ENCODE measurements at regions of chr10 and their contacts with region 1.

Region 1: GRCh38 chr10:12214763-12215218 is 18.8 kb downstream of the CDC123 start:
- DNase-seq: peak; percentile 24
- H3K4me3 ChIP-seq: no peak overlapping the region
- H3K27ac ChIP-seq: no peak overlapping the region
- H3K27me3 ChIP-seq: no peaks in the 10 kb centered on the region
- CTCF ChIP-seq: peak; percentile 75

Region 2: DNA sequence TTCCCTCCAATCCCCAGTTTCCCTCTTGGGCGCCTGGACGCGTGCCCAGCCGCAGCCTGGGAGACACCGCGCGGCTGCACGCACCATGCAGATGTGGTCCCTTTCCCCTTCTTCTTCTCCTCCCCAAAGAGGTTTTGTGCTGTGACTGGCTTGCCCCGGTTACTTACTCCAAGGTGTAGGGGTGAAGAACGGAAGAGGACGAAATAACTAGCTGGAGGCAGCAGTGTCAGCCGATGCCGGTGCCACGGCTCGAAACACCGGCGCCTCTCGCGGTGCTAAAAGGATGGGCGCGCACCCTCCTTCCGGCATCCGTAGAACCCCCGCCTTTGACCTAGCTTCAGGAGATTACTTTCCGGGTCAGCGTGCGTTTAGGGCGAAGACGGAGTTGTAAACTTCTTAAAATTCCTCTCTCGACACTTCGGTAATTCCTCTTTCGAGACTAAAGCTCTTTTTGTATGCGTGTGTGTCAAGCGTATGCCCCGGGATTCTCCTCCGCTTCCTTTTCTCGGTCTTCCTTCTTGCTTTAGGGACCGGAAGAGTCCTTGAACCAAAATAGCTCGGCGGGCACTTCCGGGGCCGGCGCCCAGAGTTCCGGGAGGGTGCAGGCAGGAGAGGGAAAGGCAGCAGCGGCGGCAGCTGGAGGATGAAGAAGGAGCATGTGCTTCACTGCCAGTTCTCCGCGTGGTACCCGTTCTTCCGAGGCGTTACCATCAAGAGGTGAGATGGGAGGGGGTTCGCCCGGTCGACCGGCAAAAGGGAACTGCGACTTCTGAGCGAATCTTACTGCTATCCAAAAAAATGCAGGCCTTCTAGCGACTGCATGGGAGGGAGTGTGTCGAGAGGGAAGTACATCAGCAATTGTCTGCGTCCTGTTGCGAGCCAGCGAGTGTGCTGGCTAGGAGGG is 18.9 kb before region 1 on chr10 and contains the starts of genes CDC123 and NUDT5:
- CTCF ChIA-PET with region 1: interaction called, 46 read pairs
- POLR2A ChIA-PET with region 1: interaction called, 3 read pairs
- DNase-seq: peak; percentile 66
- H3K4me3 ChIP-seq: peak within 1 kb of the TSS; percentile 99
- H3K27ac ChIP-seq: peak within 1 kb of the TSS; percentile 88
- H3K27me3 ChIP-seq: no peaks in the 10 kb centered on the region
- CTCF ChIP-seq: no peak
- polyA plus RNA-seq, gene CDC123: 124 and 138 TPM in 2 replicates
- polyA plus RNA-seq, gene NUDT5: 110 and 121 TPM in 2 replicates

Region 3: DNA sequence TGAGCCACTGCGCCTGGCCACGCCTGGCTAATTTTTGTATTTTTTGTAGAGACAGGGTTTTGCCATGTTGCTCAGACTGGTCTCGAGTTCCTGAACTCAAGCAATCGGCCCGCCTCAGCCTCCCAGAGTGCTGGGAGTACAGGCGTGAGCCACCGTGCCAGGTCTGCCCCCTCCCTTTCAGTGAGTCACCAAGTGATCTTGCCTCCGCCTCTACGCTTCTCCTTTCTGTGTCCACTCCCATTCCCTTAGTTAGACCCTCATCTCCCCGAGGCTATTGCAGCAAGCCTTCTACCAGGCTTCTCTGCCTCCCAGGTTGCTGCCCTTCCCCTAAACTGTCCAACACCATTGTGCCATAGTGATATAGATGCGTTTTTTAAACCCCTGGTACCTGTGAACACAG is 14.1 kb after region 1 on chr10:
- CTCF ChIA-PET with region 1: interaction called, 39 read pairs
- POLR2A ChIA-PET with region 1: no interaction called
- DNase-seq: no peak
- H3K4me3 ChIP-seq: no peak overlapping the region
- H3K27ac ChIP-seq: no peak overlapping the region
- H3K27me3 ChIP-seq: no peaks in the 10 kb centered on the region
- CTCF ChIP-seq: no peak

Region 4: GRCh38 chr10:12656518-12657142 is 441.8 kb after region 1 on chr10:
- CTCF ChIA-PET with region 1: interaction called, 52 read pairs
- POLR2A ChIA-PET with region 1: no interaction called
- DNase-seq: peak; percentile 11
- H3K4me3 ChIP-seq: no peak overlapping the region
- H3K27ac ChIP-seq: no peak overlapping the region
- H3K27me3 ChIP-seq: no peaks in the 10 kb centered on the region
- CTCF ChIP-seq: peak; percentile 76

Region 5: DNA sequence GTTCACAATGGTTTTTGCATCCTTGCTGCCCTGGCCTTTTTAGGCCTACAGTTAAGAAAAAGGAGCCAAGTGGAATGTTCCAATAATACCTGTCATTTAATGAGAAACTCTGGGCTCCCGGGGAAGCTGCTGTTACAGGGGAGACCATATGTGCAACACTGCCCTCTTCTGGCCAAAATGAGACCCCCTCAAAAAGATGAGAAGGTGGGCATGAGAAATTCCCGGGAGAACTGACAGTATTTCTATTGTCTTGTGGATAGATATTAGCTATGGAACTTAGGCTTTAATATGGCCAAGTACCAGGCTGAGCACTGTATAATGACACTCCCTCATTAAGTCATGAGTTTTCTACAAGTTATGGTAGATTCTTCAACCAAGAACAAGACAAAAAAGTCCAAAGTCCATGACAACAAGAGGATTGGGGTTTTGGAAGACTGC is 687.4 kb after region 1 on chr10:
- CTCF ChIA-PET with region 1: interaction called, 13 read pairs
- POLR2A ChIA-PET with region 1: no interaction called
- DNase-seq: peak; percentile 30
- H3K4me3 ChIP-seq: no peak overlapping the region
- H3K27ac ChIP-seq: no peak overlapping the region
- H3K27me3 ChIP-seq: no peaks in the 10 kb centered on the region
- CTCF ChIP-seq: peak; percentile 82

Region 6: DNA sequence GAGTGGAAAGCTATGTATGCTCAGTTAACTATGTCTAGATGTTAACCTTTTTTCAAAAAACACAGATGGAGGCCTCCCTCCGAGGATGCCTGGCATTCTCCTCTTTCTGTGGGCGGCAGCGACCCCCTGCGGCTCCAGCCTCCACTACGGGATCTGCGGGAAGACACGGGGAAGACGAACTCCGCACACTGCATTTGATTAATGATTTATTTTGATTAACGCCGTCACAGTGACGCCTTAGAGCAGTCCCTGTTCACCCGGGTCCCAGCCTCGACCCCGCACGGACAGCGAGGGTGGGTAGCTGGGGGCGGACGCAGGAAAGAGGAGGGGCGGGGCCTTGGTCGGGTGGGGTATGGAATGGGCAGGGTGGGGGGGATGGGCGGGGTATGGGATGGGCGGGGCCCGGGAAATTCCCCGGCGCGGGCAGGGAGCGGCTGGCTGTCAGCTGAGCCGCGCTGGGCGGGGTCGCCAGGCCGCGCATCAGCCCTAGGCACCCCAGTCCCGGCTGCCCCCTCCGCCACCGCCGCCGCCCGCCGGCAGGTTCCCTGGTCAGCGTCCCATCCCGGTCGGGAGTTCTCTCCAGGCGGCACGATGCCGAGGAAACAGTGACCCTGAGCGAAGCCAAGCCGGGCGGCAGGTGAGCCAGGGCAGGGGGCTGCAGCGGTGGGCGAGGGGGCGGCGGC is 885.0 kb after region 1 on chr10 and contains the start of gene OPTN:
- CTCF ChIA-PET with region 1: interaction called, 17 read pairs
- POLR2A ChIA-PET with region 1: no interaction called
- DNase-seq: peak; percentile 59
- H3K4me3 ChIP-seq: peak within 1 kb of the TSS; percentile 88
- H3K27ac ChIP-seq: peak within 1 kb of the TSS; percentile 82
- H3K27me3 ChIP-seq: no peaks in the 10 kb centered on the region
- CTCF ChIP-seq: peak; percentile 79
- polyA plus RNA-seq, gene OPTN: 73.8 and 82.7 TPM in 2 replicates

Measured in AG04450 (cell line).